PC-9 (cell line): ENCODE measurements at regions of chr4 and their contacts with region 1.

Region 1: DNA sequence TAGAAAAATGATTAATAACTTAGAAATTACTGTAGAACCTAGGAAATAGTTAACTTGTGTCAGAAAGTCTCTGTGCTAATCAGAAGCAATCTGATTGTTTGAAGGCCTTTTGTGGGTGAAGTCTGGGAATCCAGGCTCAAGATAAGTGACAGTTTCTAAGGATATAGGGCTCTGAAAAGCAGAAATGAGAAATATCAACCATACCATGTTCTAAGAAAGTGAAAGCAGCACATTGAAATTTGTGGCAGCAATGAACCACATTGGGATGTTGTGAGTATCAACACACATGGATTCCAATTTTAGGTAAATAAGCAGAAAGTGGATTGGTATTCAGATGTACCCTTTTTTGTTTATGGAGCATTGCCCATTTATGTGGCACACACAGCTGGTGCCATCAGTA is 464.6 kb downstream of the IL15 start:
- DNase-seq: no peak
- H3K4me3 ChIP-seq: no peak overlapping the region
- H3K27ac ChIP-seq: no peak overlapping the region
- H3K4me1 ChIP-seq: 0 out of 2 replicates have a peak, but pooled peaks cover 6% of the 10 kb centered on the region
- H3K27me3 ChIP-seq: no peaks in the 10 kb centered on the region
- CTCF ChIP-seq: no peak

Region 2: DNA sequence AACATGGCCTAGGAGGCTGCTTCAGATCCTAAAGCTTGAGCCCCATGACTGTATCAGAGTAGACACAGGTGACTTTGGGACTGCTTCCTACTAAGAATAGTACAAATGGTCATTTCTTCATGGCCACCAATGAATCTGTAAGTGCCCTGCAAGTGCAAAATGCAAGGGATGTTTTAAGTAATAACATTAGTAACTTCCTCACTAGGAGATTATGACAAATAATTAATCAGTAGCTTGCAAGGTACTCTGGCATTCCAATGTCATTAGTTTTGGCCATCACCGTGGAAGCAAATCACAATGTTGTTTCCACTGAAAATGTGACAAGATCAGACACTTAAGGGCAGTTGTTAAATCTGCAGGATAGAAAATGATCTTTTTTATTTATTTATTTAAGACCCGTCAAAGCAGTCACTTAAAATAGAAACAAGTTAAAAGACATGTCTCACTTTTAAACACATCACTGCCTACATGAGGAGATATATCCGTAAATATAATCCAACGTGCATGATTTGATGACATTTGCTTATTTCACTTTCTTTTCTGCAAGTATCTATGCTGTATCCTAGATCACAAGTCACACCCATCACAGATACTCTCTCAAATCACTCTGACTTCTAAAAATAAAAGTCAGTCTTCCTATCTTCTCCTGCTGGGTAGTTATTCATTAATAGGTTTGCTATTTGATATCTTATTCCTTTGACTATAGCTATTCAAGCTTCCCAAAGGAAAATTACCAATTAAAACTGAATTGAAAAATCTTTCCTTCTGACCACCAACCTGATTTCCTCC is 64.0 kb before region 1 on chr4:
- CTCF ChIA-PET with region 1: no interaction called
- POLR2A ChIA-PET with region 1: no interaction called
- intact Hi-C with region 1: no loop called
- DNase-seq: no peak
- H3K4me3 ChIP-seq: no peak overlapping the region
- H3K27ac ChIP-seq: no peak overlapping the region
- H3K4me1 ChIP-seq: no peaks in the 10 kb centered on the region
- H3K27me3 ChIP-seq: no peaks in the 10 kb centered on the region
- CTCF ChIP-seq: no peak

Region 3: GRCh38 chr4:142065086-142065647 is 35.8 kb before region 1 on chr4:
- CTCF ChIA-PET with region 1: no interaction called
- POLR2A ChIA-PET with region 1: interaction called, 14 read pairs
- intact Hi-C with region 1: no loop called
- DNase-seq: no peak
- H3K4me3 ChIP-seq: no peak overlapping the region
- H3K27ac ChIP-seq: no peak overlapping the region
- H3K4me1 ChIP-seq: no peaks in the 10 kb centered on the region
- H3K27me3 ChIP-seq: no peaks in the 10 kb centered on the region
- CTCF ChIP-seq: no peak

Region 4: DNA sequence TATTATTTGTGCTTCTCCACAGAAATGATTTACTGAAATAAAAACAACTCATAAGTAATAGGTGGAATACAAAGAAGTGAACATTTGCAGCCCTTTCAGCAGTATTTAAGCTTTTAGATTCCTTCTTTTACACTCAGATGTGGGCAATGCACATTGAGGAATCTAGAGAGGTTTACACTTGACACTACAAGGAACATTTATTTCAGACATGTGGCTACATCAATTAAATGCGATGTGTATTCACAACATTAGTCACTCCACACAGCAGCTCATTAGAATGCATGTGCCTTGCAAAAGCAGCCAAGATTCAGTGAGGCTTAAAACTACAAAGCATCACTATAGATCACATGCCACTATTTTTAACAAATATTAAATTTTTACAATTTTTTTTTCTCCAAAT is 264.4 kb after region 1 on chr4:
- CTCF ChIA-PET with region 1: no interaction called
- POLR2A ChIA-PET with region 1: no interaction called
- intact Hi-C with region 1: no loop called
- DNase-seq: no peak
- H3K4me3 ChIP-seq: no peak overlapping the region
- H3K27ac ChIP-seq: no peak overlapping the region
- H3K4me1 ChIP-seq: no peaks in the 10 kb centered on the region
- H3K27me3 ChIP-seq: no peaks in the 10 kb centered on the region
- CTCF ChIP-seq: no peak

Region 5: GRCh38 chr4:142817442-142817841 is 716.5 kb after region 1 on chr4:
- CTCF ChIA-PET with region 1: no interaction called
- POLR2A ChIA-PET with region 1: no interaction called
- intact Hi-C with region 1: no loop called
- DNase-seq: peak; percentile 59 to 80
- H3K4me3 ChIP-seq: peak overlapping the region; percentile 10; the same call in 1 of the 2 replicates
- H3K27ac ChIP-seq: peak overlapping the region; percentile 50
- H3K4me1 ChIP-seq: peaks cover 15% of the 10 kb centered on the region
- H3K27me3 ChIP-seq: no peaks in the 10 kb centered on the region
- CTCF ChIP-seq: no peak